ENCODE measurements at regions of chr1 and their contacts with region 1.

Region 1: GRCh38 chr1:36342481-36343478 is 19.3 kb upstream of the EVA1B start:
- DNase-seq: peak; percentile 77
- H3K4me3 ChIP-seq: no peak overlapping the region
- H3K27ac ChIP-seq: peak overlapping the region; percentile 30
- H3K4me1 ChIP-seq: peaks cover 15% of the 10 kb centered on the region
- H3K27me3 ChIP-seq: no peaks in the 10 kb centered on the region
- CTCF ChIP-seq: peak; percentile 77

Region 2: DNA sequence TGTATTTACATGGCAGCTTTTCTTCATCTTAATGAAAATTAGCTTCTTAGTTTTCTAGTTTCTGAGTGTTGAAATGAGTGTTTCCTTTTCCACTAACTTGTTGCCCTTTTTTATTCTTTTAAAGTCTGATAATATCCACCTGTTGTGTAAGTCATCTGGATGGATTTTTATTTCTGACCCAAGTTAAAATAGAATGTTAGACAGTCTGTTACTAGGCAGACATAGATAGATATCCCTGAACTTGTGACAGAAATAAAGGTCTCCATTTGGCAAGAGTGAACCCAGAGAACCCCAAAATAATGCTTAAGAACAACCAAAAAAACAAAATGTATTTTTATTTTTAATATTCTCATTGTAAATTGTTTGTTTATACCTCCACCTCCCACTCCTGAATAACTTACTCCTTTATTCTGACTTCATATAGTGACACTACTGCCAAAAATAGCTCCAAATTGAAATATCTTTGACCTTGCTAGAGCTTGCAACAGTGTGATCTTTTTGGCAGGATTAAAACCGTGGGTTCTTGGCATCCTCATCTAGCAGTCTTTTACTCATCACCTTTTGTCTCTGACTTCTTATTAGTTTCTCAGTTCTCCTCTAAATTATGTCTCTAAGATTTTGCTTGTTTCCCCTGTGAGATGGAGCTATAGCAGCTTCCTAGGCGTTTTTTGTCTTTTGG is 63.5 kb before region 1 on chr1:
- CTCF ChIA-PET with region 1: no interaction called
- dilution Hi-C with region 1: no loop called
- in situ Hi-C with region 1: no loop called
- intact Hi-C with region 1: no loop called
- DNase-seq: no peak
- H3K4me3 ChIP-seq: no peak overlapping the region
- H3K27ac ChIP-seq: no peak overlapping the region
- H3K4me1 ChIP-seq: peaks cover 4% of the 10 kb centered on the region
- H3K27me3 ChIP-seq: no peaks in the 10 kb centered on the region
- CTCF ChIP-seq: no peak

Region 3: DNA sequence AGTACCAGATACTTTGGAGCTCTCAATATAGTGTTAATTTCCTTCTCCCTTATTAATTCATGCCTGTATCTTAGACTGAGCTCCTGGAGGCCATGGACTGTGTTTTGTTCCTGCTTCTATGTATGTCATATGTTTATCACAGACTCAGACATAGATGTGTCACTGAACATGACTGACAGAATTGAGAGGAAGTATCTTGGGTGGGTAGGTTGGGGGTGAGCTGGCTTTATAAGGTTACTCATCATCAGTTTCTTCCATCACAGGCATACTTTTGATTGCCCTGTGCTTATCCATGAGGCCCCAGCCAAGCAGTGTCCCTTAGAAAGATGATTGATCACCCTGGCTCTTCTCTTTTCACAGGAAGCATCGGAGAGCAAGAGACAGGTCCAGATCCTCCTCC is 42.3 kb before region 1 on chr1:
- CTCF ChIA-PET with region 1: no interaction called
- dilution Hi-C with region 1: loop called (anchors 5 kb)
- in situ Hi-C with region 1: no loop called
- intact Hi-C with region 1: no loop called
- DNase-seq: peak; percentile 70
- H3K4me3 ChIP-seq: no peak overlapping the region
- H3K27ac ChIP-seq: peak overlapping the region; percentile 87
- H3K4me1 ChIP-seq: peaks cover 28% of the 10 kb centered on the region
- H3K27me3 ChIP-seq: no peaks in the 10 kb centered on the region
- CTCF ChIP-seq: no peak

Region 4: DNA sequence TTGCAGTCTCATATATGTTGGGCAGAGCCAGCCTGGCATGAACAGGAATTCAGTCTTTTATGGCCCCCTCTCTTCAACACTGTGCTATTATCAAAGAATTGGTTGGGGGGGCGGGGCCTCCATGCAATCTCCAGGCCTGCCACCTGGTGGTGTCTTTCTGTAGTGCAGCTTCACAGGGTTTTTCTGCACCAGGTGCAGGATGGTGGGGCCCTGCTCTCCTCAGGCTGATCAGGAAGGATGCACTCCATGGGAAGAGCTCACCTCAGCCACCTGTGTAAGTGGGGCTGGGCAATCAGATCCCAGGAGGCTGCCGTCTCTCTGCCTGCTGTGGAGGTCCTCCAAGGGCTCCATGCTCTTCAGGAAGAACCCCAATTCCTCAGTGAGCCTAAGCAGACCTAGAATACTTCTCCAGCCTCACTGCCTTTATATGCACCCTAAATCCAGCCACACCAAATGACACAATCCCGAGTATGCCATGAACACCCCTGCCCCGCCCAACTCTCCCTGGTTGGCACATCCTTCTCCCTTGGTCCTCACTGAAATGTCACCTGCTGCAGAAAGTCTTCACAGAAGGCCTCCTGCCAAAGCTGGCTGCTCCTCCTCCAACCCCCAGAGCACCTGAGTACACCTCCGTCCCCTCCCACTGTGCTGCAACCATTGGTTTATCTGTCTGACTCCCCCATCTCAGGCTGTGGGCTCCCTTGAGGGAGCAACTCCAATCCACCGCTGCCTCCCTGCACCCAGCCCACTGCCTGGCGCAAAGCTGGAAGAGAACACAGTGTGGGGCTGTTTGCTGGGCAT is 26.5 kb after region 1 on chr1:
- CTCF ChIA-PET with region 1: interaction called, 3 read pairs
- dilution Hi-C with region 1: no loop called
- in situ Hi-C with region 1: no loop called
- intact Hi-C with region 1: loop called (anchors 1 kb)
- DNase-seq: peak; percentile 50
- H3K4me3 ChIP-seq: no peak overlapping the region
- H3K27ac ChIP-seq: no peak overlapping the region
- H3K4me1 ChIP-seq: peaks cover 24% of the 10 kb centered on the region
- H3K27me3 ChIP-seq: no peaks in the 10 kb centered on the region
- CTCF ChIP-seq: peak; percentile 85 to 90

Region 5: DNA sequence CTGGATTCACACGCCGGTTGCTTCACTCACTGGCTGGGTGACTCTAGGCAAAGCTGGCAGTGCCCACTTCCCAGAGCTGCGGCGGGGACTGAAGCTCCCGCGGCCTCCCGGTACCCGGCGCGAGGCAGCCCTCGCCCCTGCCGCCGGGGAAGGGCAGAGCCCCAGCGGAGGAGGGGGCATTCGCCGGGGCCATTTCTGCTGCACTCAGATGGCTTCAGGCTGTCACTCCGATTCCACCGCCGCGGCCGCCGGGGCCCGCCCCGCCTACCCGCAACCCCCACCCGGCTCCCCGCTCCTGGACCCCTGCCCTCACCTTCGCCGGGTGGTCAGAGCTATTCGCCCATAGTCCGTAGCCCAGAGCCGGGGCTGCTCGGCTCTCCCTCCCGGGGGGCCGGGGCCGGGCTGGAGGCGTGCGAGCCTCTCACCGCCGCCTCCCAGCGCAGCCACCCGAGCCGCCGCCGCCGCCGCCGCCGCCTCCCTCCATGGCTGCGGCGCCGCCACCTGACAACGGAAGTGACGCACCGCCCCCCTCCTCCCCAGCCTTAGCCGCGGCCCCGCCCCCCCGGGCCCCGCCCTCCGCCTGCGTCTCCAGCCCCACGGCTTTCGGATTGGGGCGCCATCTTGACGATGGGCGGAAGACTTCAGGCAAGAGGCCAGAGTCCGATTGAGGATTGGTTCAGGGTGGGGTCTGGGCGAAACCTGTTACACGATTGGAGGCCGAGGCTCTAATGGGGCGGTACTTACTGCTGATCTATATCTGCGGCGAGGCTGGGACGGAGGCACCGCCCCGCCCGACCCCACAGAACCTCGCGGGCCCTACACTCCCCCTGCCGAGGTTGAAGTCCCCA is 42.9 kb after region 1 on chr1 and contains the start of gene STK40:
- CTCF ChIA-PET with region 1: no interaction called
- dilution Hi-C with region 1: no loop called
- in situ Hi-C with region 1: no loop called
- intact Hi-C with region 1: loop called (anchors 1 kb)
- DNase-seq: peak; percentile 99
- H3K4me3 ChIP-seq: peak within 1 kb of the TSS; percentile 66 to 79 (median 70)
- H3K27ac ChIP-seq: peak within 1 kb of the TSS; percentile 100
- H3K4me1 ChIP-seq: peaks cover 31% of the 10 kb centered on the region
- H3K27me3 ChIP-seq: no peaks in the 10 kb centered on the region
- CTCF ChIP-seq: no peak
- total RNA-seq, gene STK40: 13.2 to 21.3 TPM

Region 6: DNA sequence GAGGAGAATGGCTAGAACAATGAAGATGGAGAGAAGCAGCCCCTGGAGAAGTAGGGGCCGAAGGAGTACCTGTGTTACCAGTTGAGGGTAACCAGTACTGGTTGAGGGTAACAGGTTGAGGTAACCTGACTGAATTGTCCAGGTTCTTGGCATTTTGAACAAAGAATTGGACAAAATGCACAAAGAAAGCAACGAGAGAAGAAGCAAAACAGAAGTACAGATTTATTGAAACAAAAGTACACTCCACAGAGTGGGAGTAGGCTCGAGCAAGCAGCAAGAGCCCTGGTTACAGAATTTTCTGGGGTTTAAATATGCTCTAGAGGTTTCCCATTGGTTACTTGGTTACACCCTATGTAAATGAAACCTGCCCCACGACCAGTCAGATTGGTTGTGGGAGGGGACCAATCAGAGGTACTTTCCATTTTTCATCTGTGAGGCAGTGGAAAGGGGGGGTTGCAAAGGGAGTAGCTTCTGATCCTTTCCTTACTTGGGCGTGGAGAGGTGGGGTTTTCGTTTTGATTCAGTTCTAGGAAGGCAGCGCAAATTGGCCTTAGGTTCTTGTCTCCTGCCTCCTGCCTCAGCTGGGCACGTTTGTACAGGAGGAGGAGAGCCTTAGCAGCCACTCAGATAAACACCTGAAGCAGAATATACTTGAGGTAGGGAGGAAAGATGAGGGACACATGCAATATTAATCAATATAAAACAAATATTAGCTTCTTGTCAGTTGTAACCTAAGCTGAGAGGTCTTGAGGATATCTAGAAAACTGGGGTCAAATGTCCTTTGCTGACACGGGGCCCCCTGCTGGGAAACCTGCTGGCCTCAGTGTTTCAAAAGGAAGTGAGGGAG is 69.1 kb after region 1 on chr1:
- CTCF ChIA-PET with region 1: no interaction called
- dilution Hi-C with region 1: loop called (anchors 5 kb)
- in situ Hi-C with region 1: loop called in 1 of 2 experiments (anchors 10 kb)
- intact Hi-C with region 1: no loop called
- DNase-seq: peak; percentile 51
- H3K4me3 ChIP-seq: no peak overlapping the region
- H3K27ac ChIP-seq: no peak overlapping the region
- H3K4me1 ChIP-seq: peaks cover 8% of the 10 kb centered on the region
- H3K27me3 ChIP-seq: no peaks in the 10 kb centered on the region
- CTCF ChIP-seq: peak in 1 of 2 donors; percentile 2

Region 7: GRCh38 chr1:36542962-36543515 is 200.3 kb after region 1 on chr1:
- CTCF ChIA-PET with region 1: no interaction called
- dilution Hi-C with region 1: no loop called
- in situ Hi-C with region 1: no loop called
- intact Hi-C with region 1: no loop called
- DNase-seq: no peak
- H3K4me3 ChIP-seq: no peak overlapping the region
- H3K27ac ChIP-seq: no peak overlapping the region
- H3K4me1 ChIP-seq: no peaks in the 10 kb centered on the region
- H3K27me3 ChIP-seq: no peaks in the 10 kb centered on the region
- CTCF ChIP-seq: peak; percentile 23 to 29

Measured in mammary epithelial cell (primary cell).